MCF 10A (cell line): ENCODE measurements at regions of chr7 and their contacts with region 1.

Region 1: GRCh38 chr7:142587578-142588191 is 161.6 kb upstream of the PRSS1 start:
- DNase-seq: peak; percentile 85
- H3K4me3 Mint-ChIP-seq: no peak overlapping the region
- H3K27ac Mint-ChIP-seq: no peak overlapping the region
- H3K4me1 Mint-ChIP-seq: peaks cover 6% of the 10 kb centered on the region
- H3K27me3 Mint-ChIP-seq: no peaks in the 10 kb centered on the region
- CTCF ChIP-seq: peak; percentile 63

Region 2: GRCh38 chr7:142445019-142445686 is 142.5 kb before region 1 on chr7:
- CTCF ChIA-PET with region 1: no interaction called
- POLR2A ChIA-PET with region 1: no interaction called
- intact Hi-C with region 1: no loop called
- DNase-seq: no peak
- H3K4me3 Mint-ChIP-seq: no peak overlapping the region
- H3K27ac Mint-ChIP-seq: no peak overlapping the region
- H3K4me1 Mint-ChIP-seq: peaks cover 9% of the 10 kb centered on the region
- H3K27me3 Mint-ChIP-seq: peaks cover 17% of the 10 kb centered on the region
- CTCF ChIP-seq: no peak

Region 3: GRCh38 chr7:142557971-142558582 is 29.6 kb before region 1 on chr7:
- CTCF ChIA-PET with region 1: interaction called, 19 read pairs
- POLR2A ChIA-PET with region 1: interaction called, 7 read pairs
- intact Hi-C with region 1: loop called (anchors 2 kb)
- DNase-seq: peak; percentile 78
- H3K4me3 Mint-ChIP-seq: peak overlapping the region; percentile 35
- H3K27ac Mint-ChIP-seq: peak overlapping the region; percentile 88
- H3K4me1 Mint-ChIP-seq: peaks cover 48% of the 10 kb centered on the region
- H3K27me3 Mint-ChIP-seq: no peaks in the 10 kb centered on the region
- CTCF ChIP-seq: peak; percentile 59

Region 4: DNA sequence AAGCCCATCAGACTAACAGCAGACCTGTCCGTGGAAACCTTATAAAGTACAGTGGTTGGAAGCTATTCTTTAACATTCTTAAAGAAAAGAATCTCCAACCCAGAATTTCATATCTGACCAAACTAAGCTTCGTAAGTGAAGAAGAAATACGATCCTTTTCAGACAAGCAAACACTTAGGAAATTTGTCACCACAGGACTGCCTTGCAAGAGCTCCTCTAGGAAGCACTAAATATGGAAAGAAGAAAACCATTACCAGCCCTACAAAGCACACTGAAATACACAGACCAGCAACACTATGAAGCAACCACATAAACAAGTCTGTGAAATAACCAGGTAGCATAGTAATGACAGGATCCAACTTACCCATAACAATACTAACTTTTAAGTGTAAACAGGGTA is 16.1 kb before region 1 on chr7:
- CTCF ChIA-PET with region 1: interaction called, 16 read pairs
- POLR2A ChIA-PET with region 1: interaction called, 5 read pairs
- intact Hi-C with region 1: no loop called
- DNase-seq: no peak
- H3K4me3 Mint-ChIP-seq: no peak overlapping the region
- H3K27ac Mint-ChIP-seq: no peak overlapping the region
- H3K4me1 Mint-ChIP-seq: peaks cover 10% of the 10 kb centered on the region
- H3K27me3 Mint-ChIP-seq: no peaks in the 10 kb centered on the region
- CTCF ChIP-seq: no peak

Region 5: GRCh38 chr7:142598297-142598696 is 10.6 kb after region 1 on chr7:
- CTCF ChIA-PET with region 1: interaction called, 92 read pairs
- POLR2A ChIA-PET with region 1: interaction called, 6 read pairs
- intact Hi-C with region 1: no loop called
- DNase-seq: no peak
- H3K4me3 Mint-ChIP-seq: no peak overlapping the region
- H3K27ac Mint-ChIP-seq: no peak overlapping the region
- H3K4me1 Mint-ChIP-seq: no peaks in the 10 kb centered on the region
- H3K27me3 Mint-ChIP-seq: no peaks in the 10 kb centered on the region
- CTCF ChIP-seq: no peak

Region 6: DNA sequence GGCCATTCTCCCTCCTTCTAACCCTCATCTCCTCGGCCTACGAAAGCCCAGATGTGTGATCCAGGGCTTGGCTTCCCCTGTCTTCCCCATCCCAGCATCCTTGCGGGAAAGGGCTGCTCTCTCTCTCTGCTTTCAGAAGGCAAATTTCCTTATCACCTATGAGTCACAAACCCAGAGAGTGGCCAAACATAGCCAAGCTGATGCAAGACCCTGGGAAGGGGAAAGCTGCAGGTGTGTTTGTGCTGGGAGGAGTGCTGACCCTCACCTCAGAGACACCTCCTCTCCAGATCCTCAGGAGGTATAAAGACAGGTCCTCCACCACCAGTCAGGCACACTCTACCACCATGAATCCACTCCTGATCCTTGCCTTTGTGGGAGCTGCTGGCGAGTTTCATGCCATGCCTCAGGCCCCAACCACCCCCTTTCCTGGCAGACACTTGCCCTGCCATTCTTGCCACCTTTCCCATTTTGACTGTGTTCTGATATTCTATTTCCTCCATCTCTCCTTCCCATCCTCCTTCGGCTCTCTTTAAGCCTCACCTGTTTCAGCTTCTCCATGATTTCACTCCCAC is 172.5 kb after region 1 on chr7:
- CTCF ChIA-PET with region 1: no interaction called
- POLR2A ChIA-PET with region 1: no interaction called
- intact Hi-C with region 1: no loop called
- DNase-seq: no peak
- H3K4me3 Mint-ChIP-seq: no peak overlapping the region
- H3K27ac Mint-ChIP-seq: no peak overlapping the region
- H3K4me1 Mint-ChIP-seq: peaks cover 20% of the 10 kb centered on the region
- H3K27me3 Mint-ChIP-seq: peaks cover 87% of the 10 kb centered on the region
- CTCF ChIP-seq: no peak